ENCODE measurements at regions of chr7 and their contacts with region 1.

Region 1: DNA sequence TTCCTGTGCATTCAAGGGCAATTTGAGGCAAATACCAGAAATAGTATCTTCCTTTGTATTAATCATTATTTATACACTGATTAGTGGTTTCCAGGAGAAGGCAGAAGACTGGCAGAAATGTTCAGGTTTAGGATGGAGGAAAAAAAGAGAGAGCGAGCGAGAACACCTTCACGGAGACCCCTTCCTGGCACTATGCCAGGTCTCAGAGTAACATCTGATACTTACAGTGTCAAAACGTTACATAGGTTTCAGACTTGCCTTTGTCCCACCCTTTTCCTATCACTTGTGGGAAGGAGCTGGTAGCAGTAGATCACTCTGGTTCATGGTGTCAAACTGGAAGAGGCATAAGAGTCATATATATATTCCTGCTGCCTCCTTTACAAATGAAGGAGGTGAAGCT is 652 bp downstream of the OR2A12 start:
- DNase-seq: no peak
- H3K4me3 ChIP-seq: no peak overlapping the region
- H3K4me3 Mint-ChIP-seq: no peak overlapping the region
- H3K27ac Mint-ChIP-seq: no peak overlapping the region
- H3K4me1 ChIP-seq: no peaks in the 10 kb centered on the region
- H3K4me1 Mint-ChIP-seq: no peaks in the 10 kb centered on the region
- H3K27me3 ChIP-seq: no peaks in the 10 kb centered on the region
- H3K27me3 Mint-ChIP-seq: peaks cover 7% of the 10 kb centered on the region
- CTCF ChIP-seq: no peak

Region 2: DNA sequence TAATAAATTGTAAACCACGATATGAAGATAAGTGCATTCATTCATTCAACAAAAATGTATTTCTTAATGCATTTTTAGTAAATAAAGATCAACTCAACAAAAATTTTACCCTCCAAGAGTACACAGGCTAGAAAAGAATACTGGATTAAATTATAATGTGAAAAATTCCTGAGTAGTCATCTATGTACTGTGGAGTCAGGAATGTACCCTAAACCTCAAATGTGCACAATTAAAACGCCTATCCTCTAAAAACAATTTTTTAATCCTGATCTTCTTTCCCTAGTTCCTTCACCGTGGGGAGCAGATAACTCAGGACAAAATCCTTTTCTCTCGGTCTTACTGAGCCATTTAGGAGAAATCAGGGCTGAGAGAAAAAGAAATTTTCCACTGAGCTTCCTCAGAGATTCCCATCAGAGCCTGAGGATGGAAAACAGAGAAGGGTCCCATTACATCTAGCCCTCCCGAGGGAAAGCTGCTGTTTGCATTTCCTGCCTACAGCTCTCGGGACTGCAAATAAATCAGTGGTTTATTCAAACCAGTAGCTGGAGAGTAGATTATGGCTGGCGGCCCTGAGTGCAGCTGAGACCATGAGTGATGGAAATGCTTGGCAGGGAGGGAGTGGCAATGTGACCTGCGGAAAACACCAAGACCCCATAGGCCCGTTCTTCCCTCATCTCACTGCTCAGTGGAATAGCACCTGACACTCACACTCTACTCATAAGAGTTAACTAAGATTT is 857.5 kb before region 1 on chr7:
- CTCF ChIA-PET with region 1: no interaction called
- POLR2A ChIA-PET with region 1: no interaction called
- intact Hi-C with region 1: loop called (anchors 5 kb)
- DNase-seq: no peak
- H3K4me3 ChIP-seq: no peak overlapping the region
- H3K4me3 Mint-ChIP-seq: no peak overlapping the region
- H3K27ac Mint-ChIP-seq: no peak overlapping the region
- H3K4me1 ChIP-seq: no peaks in the 10 kb centered on the region
- H3K4me1 Mint-ChIP-seq: no peaks in the 10 kb centered on the region
- H3K27me3 ChIP-seq: no peaks in the 10 kb centered on the region
- H3K27me3 Mint-ChIP-seq: no peaks in the 10 kb centered on the region
- CTCF ChIP-seq: no peak

Measured in Caco-2 (cell line).